PC-9 (cell line): ENCODE measurements at regions of chr7 and their contacts with region 1.

Region 1: DNA sequence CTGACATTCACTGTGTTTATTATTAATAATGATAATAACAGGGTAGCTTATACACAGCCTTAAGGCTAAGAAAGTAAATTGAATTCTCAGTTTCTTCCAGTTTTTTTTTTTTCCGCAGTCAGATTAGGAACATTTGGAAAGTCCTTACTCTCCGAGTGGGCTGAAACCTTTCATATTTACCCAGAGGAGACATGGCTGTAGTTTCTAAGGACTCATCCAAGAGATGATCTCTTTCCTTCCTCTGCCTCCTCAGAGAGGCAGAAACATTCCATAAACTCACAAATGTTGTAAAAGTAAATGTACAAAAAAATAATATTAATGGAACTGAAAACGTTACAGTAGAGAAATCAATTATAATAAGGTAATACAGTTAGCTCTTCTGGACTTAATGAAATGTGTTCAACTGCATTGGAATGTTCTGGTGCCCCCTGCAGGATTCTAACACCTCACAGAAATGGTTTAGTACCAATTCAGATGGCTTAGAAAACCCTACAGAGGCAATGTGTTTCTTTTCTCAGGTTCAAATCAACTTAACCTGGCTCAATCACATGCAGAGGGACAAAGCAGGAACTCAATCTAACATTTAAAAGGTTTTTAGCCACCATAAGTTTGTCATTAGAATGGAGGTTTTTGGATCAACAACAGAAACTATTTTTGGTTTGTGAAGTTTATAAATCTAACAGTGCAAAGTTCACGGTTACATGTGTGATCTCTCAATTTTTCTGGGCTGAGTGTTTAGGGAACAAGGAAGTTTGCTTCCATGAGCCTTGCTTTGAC is 71.7 kb downstream of the ICA1 start:
- DNase-seq: peak; percentile 34 to 41
- H3K4me3 ChIP-seq: no peak overlapping the region
- H3K27ac ChIP-seq: no peak overlapping the region
- H3K4me1 ChIP-seq: no peaks in the 10 kb centered on the region
- H3K27me3 ChIP-seq: no peaks in the 10 kb centered on the region
- CTCF ChIP-seq: peak; percentile 77

Region 2: GRCh38 chr7:7662527-7662926 is 527.8 kb before region 1 on chr7:
- CTCF ChIA-PET with region 1: no interaction called
- POLR2A ChIA-PET with region 1: no interaction called
- intact Hi-C with region 1: loop called (anchors 1 kb)
- DNase-seq: peak in 1 of 2 experiments; percentile 7
- H3K4me3 ChIP-seq: no peak overlapping the region
- H3K27ac ChIP-seq: no peak overlapping the region
- H3K4me1 ChIP-seq: no peaks in the 10 kb centered on the region
- H3K27me3 ChIP-seq: no peaks in the 10 kb centered on the region
- CTCF ChIP-seq: peak; percentile 56

Region 3: DNA sequence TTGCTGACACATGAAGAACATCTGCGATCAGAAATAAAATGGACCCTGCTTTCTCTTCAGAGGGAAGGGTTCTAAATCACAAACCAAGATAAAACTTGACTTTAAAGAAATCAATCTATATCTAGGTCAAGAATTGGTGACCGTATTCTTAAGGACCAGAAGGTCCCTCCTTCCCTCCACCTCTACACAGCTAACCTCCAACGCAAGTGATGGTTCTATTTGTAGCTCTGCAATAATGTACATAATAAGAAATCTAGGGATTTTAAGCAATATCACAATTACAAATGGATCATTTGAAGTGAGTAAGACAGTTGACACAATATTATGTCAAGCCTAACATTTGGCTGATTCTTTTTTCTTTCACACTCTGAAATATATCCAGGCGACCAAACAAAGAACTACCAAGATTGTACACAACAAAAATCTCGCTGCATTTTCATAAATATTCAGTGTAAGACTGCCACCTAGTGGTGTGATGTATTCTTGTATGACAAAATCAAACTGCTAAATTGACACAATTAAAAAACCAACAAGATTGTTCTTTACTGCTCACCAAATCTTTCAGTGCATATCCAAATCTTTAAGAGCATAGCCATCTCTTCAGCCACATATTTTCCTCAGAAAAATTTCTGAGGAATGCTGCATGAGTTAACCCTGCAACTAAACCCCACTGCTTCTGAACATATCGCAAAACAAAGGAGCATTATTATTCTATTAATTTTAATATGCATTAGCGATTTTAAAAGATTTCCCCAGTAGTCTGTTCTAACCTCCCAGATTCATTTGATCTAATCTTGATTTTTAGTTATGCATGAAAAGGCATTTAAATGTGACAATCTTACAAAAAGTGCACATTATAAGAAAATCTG is 27.1 kb after region 1 on chr7:
- CTCF ChIA-PET with region 1: no interaction called
- POLR2A ChIA-PET with region 1: no interaction called
- intact Hi-C with region 1: no loop called
- DNase-seq: peak; percentile 8 to 59
- H3K4me3 ChIP-seq: no peak overlapping the region
- H3K27ac ChIP-seq: no peak overlapping the region
- H3K4me1 ChIP-seq: peaks cover 7% of the 10 kb centered on the region; the same call in 1 of the 2 replicates
- H3K27me3 ChIP-seq: no peaks in the 10 kb centered on the region
- CTCF ChIP-seq: peak; percentile 94

Region 4: DNA sequence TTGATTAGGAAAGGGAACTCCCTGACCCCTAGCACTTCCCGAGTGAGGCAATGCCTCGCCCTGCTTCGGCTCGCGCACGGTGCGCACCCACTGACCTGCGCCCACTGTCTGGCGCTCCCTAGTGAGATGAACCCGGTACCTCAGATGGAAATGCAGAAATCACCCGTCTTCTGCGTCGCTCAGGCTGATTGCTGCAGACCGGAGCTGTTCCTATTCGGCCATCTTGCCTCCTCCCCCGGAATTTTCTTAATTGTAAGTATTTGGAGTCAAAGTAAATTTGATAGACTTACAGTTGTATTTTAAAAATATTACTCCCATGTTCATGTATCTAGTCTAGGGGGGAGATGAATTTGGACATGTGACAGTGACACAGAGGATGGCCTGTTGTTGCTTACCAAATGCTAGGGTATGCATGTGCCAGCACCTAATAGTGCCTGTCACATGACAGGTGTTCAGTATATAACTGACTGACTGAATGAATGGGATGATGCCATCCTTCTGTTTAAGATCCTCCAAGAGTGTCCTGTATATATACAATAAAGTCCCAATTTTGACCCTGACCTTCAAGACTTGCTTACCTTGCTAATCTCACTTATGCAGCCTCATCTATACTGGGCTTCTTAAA is 113.7 kb after region 1 on chr7:
- CTCF ChIA-PET with region 1: no interaction called
- POLR2A ChIA-PET with region 1: no interaction called
- intact Hi-C with region 1: no loop called
- DNase-seq: no peak
- H3K4me3 ChIP-seq: no peak overlapping the region
- H3K27ac ChIP-seq: no peak overlapping the region
- H3K4me1 ChIP-seq: 0 out of 2 replicates have a peak, but pooled peaks cover 6% of the 10 kb centered on the region
- H3K27me3 ChIP-seq: 0 out of 2 replicates have a peak, but pooled peaks cover 2% of the 10 kb centered on the region
- CTCF ChIP-seq: no peak

Region 5: DNA sequence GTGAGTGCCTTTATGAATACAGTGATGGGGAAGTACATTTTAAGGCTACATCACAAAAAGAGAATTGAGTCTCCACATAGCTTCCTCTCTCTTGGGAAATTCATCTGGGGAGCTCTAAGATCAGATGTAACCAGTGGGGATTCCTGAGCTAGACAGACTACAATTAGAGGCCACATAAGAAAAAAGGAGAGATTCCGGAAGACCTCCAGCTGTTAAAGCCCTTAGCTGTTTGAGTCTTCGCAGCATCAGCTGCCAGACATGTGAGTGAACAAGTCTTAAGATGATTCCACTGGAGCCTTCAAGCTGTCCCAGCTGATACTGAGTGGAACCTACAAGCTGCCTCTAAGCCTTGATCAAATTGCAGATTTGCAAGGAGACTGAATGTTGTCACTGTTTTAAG is 691.6 kb after region 1 on chr7:
- CTCF ChIA-PET with region 1: no interaction called
- POLR2A ChIA-PET with region 1: no interaction called
- intact Hi-C with region 1: no loop called
- DNase-seq: no peak
- H3K4me3 ChIP-seq: no peak overlapping the region
- H3K27ac ChIP-seq: no peak overlapping the region
- H3K4me1 ChIP-seq: no peaks in the 10 kb centered on the region
- H3K27me3 ChIP-seq: no peaks in the 10 kb centered on the region
- CTCF ChIP-seq: no peak